A673 (cell line): ENCODE measurements at regions of chr5 and their contacts with region 1.

Region 1: DNA sequence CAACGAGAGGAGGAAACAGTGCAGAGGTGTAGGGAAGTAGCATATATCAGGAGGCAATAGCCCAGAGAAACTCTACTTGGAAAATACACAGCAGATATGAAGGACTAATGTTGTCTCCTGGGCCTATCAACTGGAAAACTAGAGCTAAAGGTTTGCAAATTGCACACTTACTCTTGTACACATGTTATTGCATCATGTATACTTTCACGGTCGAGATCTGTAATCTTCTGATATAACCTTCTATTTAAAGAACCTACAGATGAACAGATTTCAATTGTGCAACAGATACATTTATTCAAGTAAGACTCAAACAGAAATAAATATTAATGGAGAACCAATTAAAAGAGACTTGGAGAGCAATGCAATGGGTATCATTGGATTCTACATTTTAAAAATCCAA is 256.3 kb upstream of the TMEM161B start:
- DNase-seq: no peak
- H3K4me3 ChIP-seq: no peak overlapping the region
- H3K27ac ChIP-seq: no peak overlapping the region
- H3K4me1 ChIP-seq: no peaks in the 10 kb centered on the region
- H3K27me3 ChIP-seq: no peaks in the 10 kb centered on the region
- CTCF ChIP-seq: no peak

Region 2: GRCh38 chr5:88583471-88583870 is 58.5 kb after region 1 on chr5:
- CTCF ChIA-PET with region 1: no interaction called
- POLR2A ChIA-PET with region 1: no interaction called
- intact Hi-C with region 1: loop called (anchors 10 kb)
- DNase-seq: no peak
- H3K4me3 ChIP-seq: no peak overlapping the region
- H3K27ac ChIP-seq: no peak overlapping the region
- H3K4me1 ChIP-seq: no peaks in the 10 kb centered on the region
- H3K27me3 ChIP-seq: no peaks in the 10 kb centered on the region
- CTCF ChIP-seq: no peak

Region 3: GRCh38 chr5:88895681-88896501 is 370.9 kb after region 1 on chr5:
- CTCF ChIA-PET with region 1: no interaction called
- POLR2A ChIA-PET with region 1: no interaction called
- intact Hi-C with region 1: no loop called
- DNase-seq: no peak
- H3K4me3 ChIP-seq: no peak overlapping the region
- H3K27ac ChIP-seq: no peak overlapping the region
- H3K4me1 ChIP-seq: no peaks in the 10 kb centered on the region
- H3K27me3 ChIP-seq: no peaks in the 10 kb centered on the region
- CTCF ChIP-seq: no peak